Lower leg skin (tissue), 4 donors: ENCODE measurements at regions of chr5 and their contacts with region 1.

Region 1: GRCh38 chr5:16791036-16791705 is 144.9 kb downstream of the MYO10 start:
- DNase-seq: no peak
- H3K4me3 ChIP-seq: no peak overlapping the region
- CTCF ChIP-seq: no peak
- POLR2A ChIP-seq: no peak

Region 2: GRCh38 chr5:16855485-16855884 is 64.3 kb after region 1 on chr5:
- intact Hi-C with region 1: no loop called
- DNase-seq: no peak
- H3K4me3 ChIP-seq: no peak overlapping the region
- CTCF ChIP-seq: no peak
- POLR2A ChIP-seq: no peak

Region 3: GRCh38 chr5:17079562-17079961 is 288.4 kb after region 1 on chr5:
- intact Hi-C with region 1: no loop called
- DNase-seq: no peak
- H3K4me3 ChIP-seq: no peak overlapping the region
- CTCF ChIP-seq: no peak
- POLR2A ChIP-seq: no peak

Region 4: GRCh38 chr5:17189381-17190036 is 398.3 kb after region 1 on chr5:
- intact Hi-C with region 1: loop called (anchors 5 kb)
- DNase-seq: peak; percentile 69 to 94
- H3K4me3 ChIP-seq: no peak overlapping the region
- CTCF ChIP-seq: peak in 1 of 3 donors; percentile 54
- POLR2A ChIP-seq: no peak